HCT116 (cell line): ENCODE measurements at regions of chr1 and their contacts with region 1.

Region 1: DNA sequence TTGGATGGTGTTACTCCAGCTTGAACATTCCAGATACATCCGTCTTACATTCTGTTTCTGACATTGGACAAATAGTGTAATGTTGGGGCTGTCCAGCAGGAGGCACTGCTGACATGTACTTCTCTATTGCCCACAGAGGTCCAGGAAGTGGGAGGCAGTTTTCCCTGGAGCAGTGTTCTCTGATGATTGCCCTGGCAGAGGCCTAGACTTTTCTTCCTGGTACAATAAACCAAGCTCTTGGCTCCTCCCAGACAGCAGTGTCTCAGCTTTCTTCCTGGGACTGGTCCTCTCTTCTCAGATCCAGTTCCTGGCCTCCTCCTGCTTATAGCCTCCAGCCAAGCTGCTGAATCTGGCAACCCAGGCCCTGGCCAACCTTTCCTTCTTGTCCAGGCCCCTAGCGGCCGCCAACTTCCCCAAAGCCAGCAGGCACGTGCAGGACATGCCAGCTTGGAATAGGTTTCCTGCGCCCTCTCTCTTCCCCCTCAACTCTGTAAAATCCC is 14.9 kb upstream of the IFNLR1 start:
- DNase-seq: peak; percentile 86
- ATAC-seq: peak; percentile 73
- H3K4me3 ChIP-seq: no peak overlapping the region
- H3K27ac ChIP-seq: peak overlapping the region; percentile 31; the same call in 1 of the 2 replicates
- H3K4me1 ChIP-seq: peaks cover 15 to 36% of the 10 kb centered on the region in 2 experiments
- H3K27me3 ChIP-seq: no peaks in the 10 kb centered on the region
- CTCF ChIP-seq: peak; percentile 69 to 97 (median 88)
- POLR2A ChIP-seq: no peak
- RAD21 ChIP-seq: peak; percentile 99

Region 2: DNA sequence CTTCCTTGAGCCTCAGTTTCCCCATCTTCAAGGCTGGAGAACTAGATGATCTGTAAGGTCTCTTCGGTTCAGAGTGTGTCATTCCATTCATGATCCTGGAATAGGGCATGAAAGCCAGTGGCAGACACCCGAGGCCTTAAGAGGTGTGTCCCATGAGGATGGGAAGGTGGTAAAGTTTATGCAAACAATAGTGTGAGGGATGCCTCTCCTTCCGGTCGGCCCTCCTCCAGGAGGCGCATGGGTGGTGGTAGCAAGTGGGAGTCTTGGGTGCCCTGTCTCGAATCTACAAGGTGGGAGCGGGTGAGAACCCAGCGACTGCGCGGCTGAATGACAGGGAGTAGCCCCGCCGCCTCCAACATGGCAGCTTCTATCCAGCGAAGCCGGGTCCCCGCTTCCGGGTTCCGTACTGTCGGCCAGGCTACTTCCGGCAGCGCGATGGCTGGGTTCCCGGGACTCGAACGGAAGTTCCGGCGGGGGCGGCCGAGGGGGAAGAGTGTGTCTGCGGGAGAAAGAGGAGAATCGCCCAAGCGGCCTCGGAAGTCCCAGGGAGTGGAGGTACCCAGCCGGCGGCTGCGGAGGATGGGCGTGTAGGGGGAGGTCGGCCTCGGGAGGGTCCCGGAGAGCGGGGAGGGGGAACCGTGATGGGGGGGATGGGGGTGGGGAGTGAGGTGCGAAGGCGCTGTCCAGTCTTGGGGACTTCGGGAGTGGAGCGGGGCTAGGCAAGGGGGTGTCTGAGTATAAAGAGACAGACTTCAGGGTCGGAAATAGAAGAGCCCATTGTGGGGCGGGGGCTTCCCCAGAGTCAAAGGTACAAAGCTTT is 411.1 kb before region 1 on chr1 and contains the start of gene LYPLA2:
- CTCF ChIA-PET with region 1: no interaction called
- POLR2A ChIA-PET with region 1: no interaction called
- RAD21 ChIA-PET with region 1: no interaction called
- intact Hi-C with region 1: no loop called
- DNase-seq: peak; percentile 75
- ATAC-seq: peak; percentile 77
- H3K4me3 ChIP-seq: peak within 1 kb of the TSS; percentile 89 to 95
- H3K27ac ChIP-seq: peak within 1 kb of the TSS; percentile 79
- H3K4me1 ChIP-seq: peaks cover 31 to 49% of the 10 kb centered on the region in 2 experiments
- H3K27me3 ChIP-seq: no peaks in the 10 kb centered on the region
- CTCF ChIP-seq: no peak
- POLR2A ChIP-seq: no peak
- RAD21 ChIP-seq: no peak
- total RNA-seq, gene LYPLA2: 78.0 TPM

Region 3: DNA sequence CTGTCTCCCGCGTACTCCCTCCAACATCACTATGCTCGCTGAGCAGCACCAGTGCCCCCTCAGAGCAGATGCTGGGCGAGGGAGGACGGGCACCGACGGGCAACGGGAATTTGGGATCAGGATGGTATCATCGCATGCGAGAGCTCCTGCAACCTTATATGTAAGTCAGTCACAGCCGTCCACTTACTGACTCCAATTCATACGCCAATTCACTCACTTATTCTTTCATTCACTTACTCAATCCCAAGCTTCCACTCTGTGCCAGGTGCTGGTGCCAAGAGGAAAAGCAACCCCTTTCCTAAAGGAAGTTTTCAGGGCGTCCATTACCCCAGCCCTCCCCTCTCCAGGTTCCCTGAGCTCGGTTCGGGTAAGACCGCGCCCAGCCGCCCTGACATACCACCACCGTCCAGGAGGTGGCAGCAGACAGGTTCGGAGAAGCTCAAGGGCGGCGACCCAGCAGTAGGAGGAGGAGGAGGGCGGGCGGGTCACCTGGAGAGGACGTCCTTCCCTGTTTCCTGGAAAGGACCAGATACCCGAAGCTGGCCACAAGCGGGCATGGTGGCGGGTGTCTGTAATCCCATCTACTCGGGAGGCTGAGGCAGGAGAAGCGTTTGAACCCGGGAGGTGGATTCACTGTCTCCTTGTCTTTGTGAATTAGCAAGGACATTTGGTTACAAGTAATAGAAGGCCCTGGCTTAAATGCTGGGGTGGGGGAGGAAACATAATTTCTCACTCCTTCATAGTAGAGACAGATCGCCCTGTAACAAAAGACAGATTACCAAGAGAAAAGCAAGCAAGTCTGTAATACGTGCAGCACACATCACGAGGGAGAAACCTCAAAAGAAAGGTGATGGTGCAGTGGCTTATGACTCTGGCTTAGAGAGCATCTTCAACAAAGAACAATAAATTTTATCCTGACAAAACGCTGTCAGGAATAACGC is 51.5 kb before region 1 on chr1:
- CTCF ChIA-PET with region 1: interaction called, 26 read pairs
- POLR2A ChIA-PET with region 1: interaction called, 4 read pairs
- RAD21 ChIA-PET with region 1: interaction called, 11 to 12 read pairs
- intact Hi-C with region 1: loop called (anchors 5 kb)
- DNase-seq: peak; percentile 85
- ATAC-seq: peak; percentile 95
- H3K4me3 ChIP-seq: peak overlapping the region; percentile 49 to 64
- H3K27ac ChIP-seq: peak overlapping the region; percentile 4; the same call in 1 of the 2 replicates
- H3K4me1 ChIP-seq: peaks cover 5 to 21% of the 10 kb centered on the region in 2 experiments
- H3K27me3 ChIP-seq: no peaks in the 10 kb centered on the region
- CTCF ChIP-seq: peak; percentile 77 to 86 (median 82)
- POLR2A ChIP-seq: no peak
- RAD21 ChIP-seq: peak; percentile 78

Region 4: DNA sequence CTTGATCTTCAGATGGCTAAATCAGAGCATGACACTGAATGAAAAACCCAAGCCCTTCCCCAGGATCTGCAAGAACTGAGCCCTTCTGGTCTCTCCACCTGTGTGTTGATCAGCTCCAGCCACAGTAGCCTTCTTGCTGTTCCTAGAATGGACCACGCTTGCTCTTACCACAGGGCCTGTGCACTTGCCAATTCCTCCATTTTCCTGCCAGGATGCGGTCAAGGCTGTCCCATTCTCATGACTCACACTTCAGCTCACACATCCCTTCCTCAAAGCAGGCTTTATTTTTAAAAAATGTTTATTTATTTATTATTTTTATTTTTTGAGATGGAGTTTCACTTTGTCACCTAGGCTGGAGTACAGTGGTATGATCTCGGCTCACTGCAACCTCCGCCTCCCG is 73.5 kb after region 1 on chr1:
- CTCF ChIA-PET with region 1: no interaction called
- POLR2A ChIA-PET with region 1: no interaction called
- RAD21 ChIA-PET with region 1: no interaction called
- intact Hi-C with region 1: no loop called
- DNase-seq: no peak
- ATAC-seq: no peak
- H3K4me3 ChIP-seq: no peak overlapping the region
- H3K27ac ChIP-seq: no peak overlapping the region
- H3K4me1 ChIP-seq: peaks cover 0 to 7% of the 10 kb centered on the region in 2 experiments; a peak in 1 of 4 replicates
- H3K27me3 ChIP-seq: peaks cover 5% of the 10 kb centered on the region; the same call in 1 of the 2 replicates
- CTCF ChIP-seq: no peak
- POLR2A ChIP-seq: no peak
- RAD21 ChIP-seq: no peak

Region 5: DNA sequence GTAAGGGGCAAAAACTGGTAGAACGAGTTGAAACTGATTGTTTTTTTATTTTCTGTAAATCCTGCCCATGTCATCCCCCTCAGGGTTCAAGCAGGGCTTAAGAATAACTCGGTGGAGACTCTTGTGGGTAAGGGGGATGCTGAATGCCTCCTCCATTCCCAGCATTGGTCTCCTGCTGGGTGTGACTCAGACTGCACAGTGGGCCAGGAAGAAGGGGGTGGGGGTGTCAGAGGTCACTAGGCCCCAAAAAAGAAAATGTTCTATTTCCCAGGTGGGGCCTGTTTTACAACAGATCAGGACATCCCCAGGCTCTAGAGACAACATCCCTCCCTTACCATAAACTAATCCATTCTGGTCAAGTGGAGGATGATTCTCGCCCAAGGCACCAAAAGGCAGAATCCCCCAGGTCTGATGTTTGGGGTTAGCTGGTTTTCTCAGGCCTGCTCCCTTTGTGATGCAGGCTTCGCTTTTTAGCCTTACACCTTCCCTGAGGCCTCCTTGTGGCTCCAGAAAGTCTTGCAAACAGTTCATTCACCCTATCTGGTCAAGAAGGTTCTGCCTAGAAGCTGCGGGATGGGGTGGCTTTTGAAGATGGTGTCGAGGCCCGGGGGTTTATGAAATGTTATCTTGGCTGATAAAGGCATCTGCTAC is 106.5 kb after region 1 on chr1:
- CTCF ChIA-PET with region 1: interaction called, 11 read pairs
- POLR2A ChIA-PET with region 1: no interaction called
- RAD21 ChIA-PET with region 1: interaction called in 1 of 2 experiments, 6 read pairs
- intact Hi-C with region 1: loop called (anchors 1 kb)
- DNase-seq: no peak
- ATAC-seq: peak; percentile 81
- H3K4me3 ChIP-seq: no peak overlapping the region
- H3K27ac ChIP-seq: no peak overlapping the region
- H3K4me1 ChIP-seq: peaks cover 0 to 11% of the 10 kb centered on the region in 2 experiments; a peak in 3 of 4 replicates
- H3K27me3 ChIP-seq: peaks cover 20% of the 10 kb centered on the region; the same call in 1 of the 2 replicates
- CTCF ChIP-seq: peak; percentile 29 to 50 (median 41); a peak in 3 of 6 replicates
- POLR2A ChIP-seq: no peak
- RAD21 ChIP-seq: peak; percentile 53

Region 6: GRCh38 chr1:24385160-24385940 is 183.4 kb after region 1 on chr1:
- CTCF ChIA-PET with region 1: interaction called, 457 read pairs
- POLR2A ChIA-PET with region 1: interaction called, 3 read pairs
- RAD21 ChIA-PET with region 1: interaction called, 3 to 37 read pairs
- intact Hi-C with region 1: no loop called
- DNase-seq: no peak
- ATAC-seq: peak; percentile 92
- H3K4me3 ChIP-seq: no peak overlapping the region
- H3K27ac ChIP-seq: no peak overlapping the region
- H3K4me1 ChIP-seq: peaks cover 0 to 20% of the 10 kb centered on the region in 2 experiments; a peak in 2 of 4 replicates
- H3K27me3 ChIP-seq: no peaks in the 10 kb centered on the region
- CTCF ChIP-seq: peak; percentile 97 to 99 (median 98)
- POLR2A ChIP-seq: no peak
- RAD21 ChIP-seq: peak; percentile 81

Region 7: DNA sequence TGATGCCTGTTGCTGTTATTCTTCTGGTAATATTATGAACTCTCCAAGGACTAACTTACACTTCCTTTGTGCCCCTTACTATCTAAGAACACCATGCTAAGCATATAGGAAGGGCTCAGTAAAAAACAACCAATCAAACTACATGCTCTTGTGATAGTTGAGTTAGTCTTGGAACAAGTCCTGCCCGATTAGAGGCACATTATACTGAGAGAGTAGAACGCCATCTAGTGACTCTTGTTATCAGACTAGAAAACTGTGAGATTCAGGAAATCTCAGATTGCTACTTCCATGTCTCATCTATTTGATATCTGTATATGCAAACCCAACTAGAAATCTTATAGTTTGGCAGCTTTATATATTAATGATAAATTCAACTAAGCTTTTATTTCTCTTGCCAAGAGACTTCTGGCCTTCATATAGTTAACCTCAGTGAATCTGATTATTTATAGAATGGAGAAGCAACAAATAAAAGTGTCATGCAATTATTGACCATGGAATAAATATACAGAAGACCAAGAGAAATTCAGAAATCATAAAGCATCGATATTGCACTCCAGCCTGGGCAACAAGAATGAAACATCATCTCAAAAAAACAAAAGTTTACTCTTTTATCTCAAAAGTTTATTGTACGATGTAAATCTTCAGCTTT is 433.3 kb after region 1 on chr1:
- CTCF ChIA-PET with region 1: interaction called, 4 read pairs
- POLR2A ChIA-PET with region 1: no interaction called
- RAD21 ChIA-PET with region 1: no interaction called
- intact Hi-C with region 1: loop called (anchors 1 kb)
- DNase-seq: peak; percentile 65
- ATAC-seq: peak; percentile 97
- H3K4me3 ChIP-seq: no peak overlapping the region
- H3K27ac ChIP-seq: no peak overlapping the region
- H3K4me1 ChIP-seq: peaks cover 5 to 8% of the 10 kb centered on the region in 2 experiments; a peak in 2 of 4 replicates
- H3K27me3 ChIP-seq: no peaks in the 10 kb centered on the region
- CTCF ChIP-seq: peak; percentile 67 to 84 (median 70)
- POLR2A ChIP-seq: no peak
- RAD21 ChIP-seq: peak; percentile 90

Region 8: DNA sequence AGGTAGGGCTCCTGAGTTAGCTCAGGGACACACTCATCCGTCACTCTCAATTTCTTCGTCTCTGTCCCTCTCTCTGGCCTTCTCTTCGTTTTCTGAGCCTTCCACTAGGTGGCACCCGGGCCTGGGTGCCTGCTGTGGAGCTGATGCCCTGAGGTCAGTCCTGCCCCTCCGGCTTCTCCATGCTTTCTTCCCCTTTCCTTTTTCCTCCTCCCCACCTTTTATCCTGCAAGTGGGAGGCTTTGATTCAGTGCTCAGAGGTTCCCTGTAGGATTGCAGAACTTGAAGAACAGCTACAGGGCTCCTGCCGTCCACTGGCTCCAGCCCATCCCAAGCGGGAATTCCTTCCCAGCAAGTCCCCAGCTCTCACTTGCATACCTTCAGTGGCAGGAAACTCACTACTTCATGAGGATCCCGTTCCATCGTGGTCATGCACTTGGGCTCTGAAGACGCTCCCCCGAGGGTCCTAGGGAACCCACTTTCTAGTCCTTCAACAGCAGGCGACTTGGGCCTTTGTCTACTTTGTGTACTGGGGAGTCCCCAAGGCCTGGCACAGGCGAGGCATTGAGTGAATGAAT is 486.7 kb after region 1 on chr1:
- CTCF ChIA-PET with region 1: no interaction called
- POLR2A ChIA-PET with region 1: no interaction called
- RAD21 ChIA-PET with region 1: no interaction called
- intact Hi-C with region 1: no loop called
- DNase-seq: peak; percentile 36
- ATAC-seq: peak; percentile 80
- H3K4me3 ChIP-seq: no peak overlapping the region
- H3K27ac ChIP-seq: no peak overlapping the region
- H3K4me1 ChIP-seq: peaks cover 7 to 29% of the 10 kb centered on the region in 2 experiments
- H3K27me3 ChIP-seq: no peaks in the 10 kb centered on the region
- CTCF ChIP-seq: peak; percentile 80 to 88 (median 87); a peak in 5 of 6 replicates
- POLR2A ChIP-seq: no peak
- RAD21 ChIP-seq: peak; percentile 94